ENCODE measurements at regions of chr18 and their contacts with region 1.

Region 1: GRCh38 chr18:32576296-32576916 is 105.7 kb upstream of the GAREM1 start:
- DNase-seq: no peak
- H3K4me3 ChIP-seq: no peak overlapping the region
- H3K27ac ChIP-seq: no peak overlapping the region
- H3K4me1 ChIP-seq: no peaks in the 10 kb centered on the region
- H3K27me3 ChIP-seq: no peaks in the 10 kb centered on the region
- CTCF ChIP-seq: no peak
- POLR2A ChIP-seq: no peak

Region 2: DNA sequence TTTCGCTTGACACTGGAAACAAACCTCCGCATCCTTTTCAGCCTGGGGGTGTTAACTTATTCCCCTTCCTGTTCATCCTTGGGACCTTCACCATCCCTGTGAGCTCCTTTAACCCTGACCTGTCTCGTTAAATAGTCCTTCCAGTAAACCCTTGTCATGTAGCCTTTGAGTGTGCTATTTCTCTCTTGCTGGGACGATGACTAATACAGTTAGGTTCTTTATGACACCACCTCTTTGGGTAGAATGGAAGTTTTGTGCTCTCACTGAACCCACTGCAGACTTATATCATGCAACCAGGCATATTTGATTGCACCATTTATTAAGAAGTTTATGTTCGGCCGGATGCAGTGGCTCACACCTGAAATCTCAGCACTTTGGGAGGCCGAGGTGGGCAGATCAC is 65.3 kb before region 1 on chr18:
- intact Hi-C with region 1: no loop called
- DNase-seq: no peak
- H3K4me3 ChIP-seq: no peak overlapping the region
- H3K27ac ChIP-seq: no peak overlapping the region
- H3K4me1 ChIP-seq: no peaks in the 10 kb centered on the region
- H3K27me3 ChIP-seq: no peaks in the 10 kb centered on the region
- CTCF ChIP-seq: no peak
- POLR2A ChIP-seq: no peak

Region 3: DNA sequence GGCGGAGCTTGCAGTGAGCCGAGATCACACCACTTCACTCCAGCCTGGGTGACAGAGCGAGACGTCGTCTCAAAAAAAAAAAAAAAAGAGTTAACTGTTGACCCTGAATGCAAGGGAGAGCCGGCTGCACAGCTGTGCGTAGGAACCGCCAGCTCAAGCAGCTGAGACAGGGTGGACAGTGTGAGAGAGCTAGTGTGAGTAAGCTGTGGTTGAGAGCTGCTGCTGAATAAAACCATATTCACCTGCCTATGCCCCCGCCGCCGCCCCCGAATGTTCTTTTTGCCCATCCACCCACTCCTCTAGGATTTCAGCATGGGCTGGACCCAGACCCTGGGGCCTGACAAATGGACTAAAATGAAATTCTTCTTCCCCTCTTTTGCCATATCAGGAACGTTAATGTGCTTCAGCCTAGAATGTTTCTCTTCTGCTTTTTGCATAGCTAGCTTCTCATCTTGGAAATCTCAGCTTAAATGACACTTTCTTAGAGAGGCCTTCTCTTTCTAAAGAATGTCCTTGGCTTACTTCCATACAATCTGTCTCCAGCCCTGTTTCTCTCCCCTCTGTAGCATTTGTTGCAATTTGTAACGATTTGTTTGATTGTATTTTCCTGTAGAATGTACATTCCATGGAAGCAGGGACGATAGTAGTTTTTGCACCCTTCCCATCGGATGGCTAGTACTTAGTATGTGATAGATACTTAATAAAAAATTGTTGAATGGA is 53.7 kb after region 1 on chr18:
- intact Hi-C with region 1: loop called (anchors 10 kb)
- DNase-seq: no peak
- H3K4me3 ChIP-seq: no peak overlapping the region
- H3K27ac ChIP-seq: no peak overlapping the region
- H3K4me1 ChIP-seq: no peaks in the 10 kb centered on the region
- H3K27me3 ChIP-seq: no peaks in the 10 kb centered on the region
- CTCF ChIP-seq: no peak
- POLR2A ChIP-seq: no peak

Measured in uterus (tissue), 4 donors.